ENCODE measurements at regions of chr18 and their contacts with region 1.

Region 1: DNA sequence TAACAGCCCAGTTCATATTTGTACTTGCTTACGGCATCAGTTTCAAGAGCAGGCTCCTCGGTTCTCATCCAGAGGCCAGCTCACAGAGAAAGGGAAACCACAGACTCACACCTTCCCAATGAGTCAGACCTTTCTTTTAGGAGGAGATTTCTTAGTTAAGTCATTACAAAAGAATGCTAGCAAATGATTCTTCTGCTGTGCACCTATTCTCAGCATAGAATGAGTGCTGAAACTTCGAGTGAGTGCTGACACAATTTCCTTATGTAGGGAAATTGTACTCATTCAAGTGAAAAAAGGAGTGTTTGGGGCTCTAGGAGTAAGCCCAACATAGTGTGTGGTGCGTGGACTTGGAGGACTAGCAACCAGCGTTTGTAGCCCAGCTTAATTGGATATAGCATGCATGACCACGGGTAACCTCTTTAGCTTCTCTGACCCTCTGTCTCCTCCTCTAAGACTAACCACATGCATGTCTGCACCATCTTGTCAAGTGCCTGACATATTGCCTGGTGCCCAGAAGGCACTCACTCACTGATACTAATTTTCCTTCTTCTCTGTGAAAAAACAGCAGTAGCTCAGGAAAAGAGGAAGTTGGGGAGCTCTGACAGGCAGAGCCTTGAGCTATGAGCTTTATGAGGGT is 87.0 kb downstream of the ALPK2 start:
- DNase-seq: peak; percentile 91
- ATAC-seq: peak; percentile 52
- H3K4me3 ChIP-seq: no peak overlapping the region
- H3K27ac ChIP-seq: peak overlapping the region; percentile 100
- H3K4me1 ChIP-seq: peaks cover 62% of the 10 kb centered on the region
- H3K27me3 ChIP-seq: no peaks in the 10 kb centered on the region
- CTCF ChIP-seq: no peak
- EP300 ChIP-seq: peak; percentile 75 to 91; a peak in 3 of 4 replicates
- POLR2A ChIP-seq: no peak
- RAD21 ChIP-seq: peak; percentile 24; the same call in 1 of the 2 replicates

Region 2: GRCh38 chr18:57569133-57569532 is 972.8 kb before region 1 on chr18:
- CTCF ChIA-PET with region 1: no interaction called
- POLR2A ChIA-PET with region 1: no interaction called
- RAD21 ChIA-PET with region 1: no interaction called
- SMC1A ChIA-PET with region 1: no interaction called
- in situ Hi-C with region 1: no loop called
- intact Hi-C with region 1: no loop called
- DNase-seq: no peak
- ATAC-seq: peak; percentile 50; the same call in 1 of the 3 replicates
- H3K4me3 ChIP-seq: no peak overlapping the region
- H3K27ac ChIP-seq: no peak overlapping the region
- H3K4me1 ChIP-seq: no peaks in the 10 kb centered on the region
- H3K27me3 ChIP-seq: no peaks in the 10 kb centered on the region
- CTCF ChIP-seq: no peak
- EP300 ChIP-seq: no peak
- POLR2A ChIP-seq: no peak
- RAD21 ChIP-seq: no peak

Region 3: GRCh38 chr18:58051765-58052460 is 490.0 kb before region 1 on chr18:
- CTCF ChIA-PET with region 1: no interaction called
- POLR2A ChIA-PET with region 1: no interaction called
- RAD21 ChIA-PET with region 1: no interaction called
- SMC1A ChIA-PET with region 1: no interaction called
- in situ Hi-C with region 1: no loop called
- intact Hi-C with region 1: no loop called
- DNase-seq: no peak
- ATAC-seq: peak; percentile 91
- H3K4me3 ChIP-seq: no peak overlapping the region
- H3K27ac ChIP-seq: no peak overlapping the region
- H3K4me1 ChIP-seq: no peaks in the 10 kb centered on the region
- H3K27me3 ChIP-seq: no peaks in the 10 kb centered on the region
- CTCF ChIP-seq: peak; percentile 38 to 62 (median 41); a peak in 5 of 6 replicates
- EP300 ChIP-seq: no peak
- POLR2A ChIP-seq: no peak
- RAD21 ChIP-seq: peak; percentile 45; the same call in 1 of the 2 replicates

Region 4: GRCh38 chr18:58416704-58417683 is 124.9 kb before region 1 on chr18:
- CTCF ChIA-PET with region 1: no interaction called
- POLR2A ChIA-PET with region 1: no interaction called
- RAD21 ChIA-PET with region 1: no interaction called
- SMC1A ChIA-PET with region 1: no interaction called
- in situ Hi-C with region 1: no loop called
- intact Hi-C with region 1: no loop called
- DNase-seq: no peak
- ATAC-seq: no peak
- H3K4me3 ChIP-seq: no peak overlapping the region
- H3K27ac ChIP-seq: no peak overlapping the region
- H3K4me1 ChIP-seq: no peaks in the 10 kb centered on the region
- H3K27me3 ChIP-seq: peaks cover 0 to 2% of the 10 kb centered on the region in 2 experiments; a peak in 3 of 4 replicates
- CTCF ChIP-seq: no peak
- EP300 ChIP-seq: no peak
- POLR2A ChIP-seq: no peak
- RAD21 ChIP-seq: no peak

Region 5: GRCh38 chr18:58552057-58552461 is 10.2 kb after region 1 on chr18:
- CTCF ChIA-PET with region 1: interaction called, 15 read pairs
- POLR2A ChIA-PET with region 1: interaction called, 76 read pairs
- RAD21 ChIA-PET with region 1: interaction called, 121 read pairs
- SMC1A ChIA-PET with region 1: interaction called, 578 read pairs
- in situ Hi-C with region 1: no loop called
- intact Hi-C with region 1: loop called (anchors 1 kb)
- DNase-seq: peak; percentile 82
- ATAC-seq: peak; percentile 78
- H3K4me3 ChIP-seq: no peak overlapping the region
- H3K27ac ChIP-seq: peak overlapping the region; percentile 80
- H3K4me1 ChIP-seq: peaks cover 37% of the 10 kb centered on the region
- H3K27me3 ChIP-seq: no peaks in the 10 kb centered on the region
- CTCF ChIP-seq: no peak
- EP300 ChIP-seq: peak; percentile 97
- POLR2A ChIP-seq: no peak
- RAD21 ChIP-seq: peak; percentile 25; the same call in 1 of the 2 replicates

Region 6: DNA sequence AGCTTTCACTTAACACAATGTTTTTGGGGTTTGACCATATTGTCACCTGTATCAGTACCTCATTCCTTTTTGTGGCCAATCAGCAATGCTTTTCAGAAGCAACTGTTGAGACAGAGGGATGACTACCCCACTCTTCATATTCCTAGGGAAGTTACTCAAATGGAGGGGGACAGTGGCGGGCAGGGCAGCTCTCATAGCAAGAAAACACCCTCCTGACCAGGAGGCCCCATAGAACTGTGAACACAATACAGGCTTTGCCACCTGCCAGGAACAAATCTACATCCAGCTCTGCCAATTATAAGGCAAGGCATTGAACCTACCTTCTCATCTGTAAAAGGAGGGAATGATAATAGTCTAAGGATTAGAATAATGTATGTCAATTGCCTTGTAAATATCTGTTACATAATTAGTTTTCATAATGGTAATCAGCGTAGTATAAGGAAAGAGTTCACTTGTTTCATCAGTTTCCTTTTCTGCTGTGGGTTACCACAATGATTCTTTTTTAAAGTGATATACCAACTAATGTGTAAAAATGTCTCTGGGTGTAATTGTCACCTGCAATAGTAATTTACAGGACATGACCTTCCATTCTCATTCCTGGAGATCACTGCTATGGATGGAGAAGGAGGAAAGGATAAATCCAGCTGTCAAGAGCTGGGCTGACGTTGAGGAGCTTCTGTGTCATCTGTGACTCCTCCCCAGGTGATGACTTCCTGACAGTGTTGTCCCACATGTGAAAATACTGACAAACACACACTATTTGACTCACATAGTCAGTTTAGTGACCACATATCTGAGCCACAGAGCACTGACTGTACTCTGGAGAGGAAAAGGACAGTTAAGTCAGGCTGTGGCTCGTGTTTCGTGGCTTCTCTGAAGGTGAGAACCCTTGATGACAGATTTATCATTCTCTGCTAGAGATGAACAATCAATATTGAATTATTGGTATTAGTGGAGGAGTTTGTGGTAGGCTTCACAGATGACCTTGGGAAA is 73.5 kb after region 1 on chr18:
- CTCF ChIA-PET with region 1: interaction called, 3 read pairs
- POLR2A ChIA-PET with region 1: interaction called, 5 read pairs
- RAD21 ChIA-PET with region 1: interaction called, 10 read pairs
- SMC1A ChIA-PET with region 1: interaction called, 19 read pairs
- in situ Hi-C with region 1: no loop called
- intact Hi-C with region 1: no loop called
- DNase-seq: peak; percentile 88
- ATAC-seq: peak; percentile 92
- H3K4me3 ChIP-seq: no peak overlapping the region; the same call in 1 of the 2 replicates
- H3K27ac ChIP-seq: peak overlapping the region; percentile 70
- H3K4me1 ChIP-seq: peaks cover 22% of the 10 kb centered on the region
- H3K27me3 ChIP-seq: no peaks in the 10 kb centered on the region
- CTCF ChIP-seq: no peak
- EP300 ChIP-seq: peak; percentile 54 to 74; a peak in 3 of 4 replicates
- POLR2A ChIP-seq: no peak
- RAD21 ChIP-seq: peak; percentile 21; the same call in 1 of the 2 replicates

Region 7: GRCh38 chr18:58661423-58661822 is 119.5 kb after region 1 on chr18:
- CTCF ChIA-PET with region 1: interaction called, 30 read pairs
- POLR2A ChIA-PET with region 1: interaction called, 54 read pairs
- RAD21 ChIA-PET with region 1: interaction called, 171 read pairs
- SMC1A ChIA-PET with region 1: interaction called, 682 read pairs
- in situ Hi-C with region 1: no loop called
- intact Hi-C with region 1: no loop called
- DNase-seq: no peak
- ATAC-seq: no peak
- H3K4me3 ChIP-seq: peak overlapping the region; percentile 28; the same call in 1 of the 2 replicates
- H3K27ac ChIP-seq: peak overlapping the region; percentile 45; the same call in 1 of the 2 replicates
- H3K4me1 ChIP-seq: peaks cover 36% of the 10 kb centered on the region
- H3K27me3 ChIP-seq: no peaks in the 10 kb centered on the region
- CTCF ChIP-seq: peak; percentile 4 to 36 (median 20); a peak in 4 of 6 replicates
- EP300 ChIP-seq: no peak
- POLR2A ChIP-seq: no peak
- RAD21 ChIP-seq: peak; percentile 25; the same call in 1 of the 2 replicates

Region 8: GRCh38 chr18:58676270-58676669 is 134.4 kb after region 1 on chr18:
- CTCF ChIA-PET with region 1: interaction called, 32 read pairs
- POLR2A ChIA-PET with region 1: interaction called, 40 read pairs
- RAD21 ChIA-PET with region 1: interaction called, 113 read pairs
- SMC1A ChIA-PET with region 1: interaction called, 682 read pairs
- in situ Hi-C with region 1: no loop called
- intact Hi-C with region 1: loop called (anchors 2 kb)
- DNase-seq: no peak
- ATAC-seq: peak; percentile 27
- H3K4me3 ChIP-seq: peak overlapping the region; percentile 95
- H3K27ac ChIP-seq: no peak overlapping the region
- H3K4me1 ChIP-seq: peaks cover 3% of the 10 kb centered on the region; the same call in 1 of the 2 replicates
- H3K27me3 ChIP-seq: no peaks in the 10 kb centered on the region
- CTCF ChIP-seq: no peak
- EP300 ChIP-seq: no peak
- POLR2A ChIP-seq: no peak
- RAD21 ChIP-seq: no peak

Measured in GM12878 (cell line).